Activated CD4-positive, alpha-beta memory T cell treated with anti-CD3 and anti-CD28 coated beads, Interleukin-2, amount 10 ng/mL, durations not matched to agents 7 days and 5 days (primary cell): ENCODE measurements at regions of chr9 and their contacts with region 1.

Region 1: GRCh38 chr9:98255578-98256296 is at the start of gene TBC1D2:
- DNase-seq: peak; percentile 98
- H3K4me3 Mint-ChIP-seq: peak within 1 kb of the TSS; percentile 93
- H3K27ac Mint-ChIP-seq: peak within 1 kb of the TSS; percentile 99
- H3K4me1 Mint-ChIP-seq: peaks cover 43% of the 10 kb centered on the region
- H3K27me3 Mint-ChIP-seq: no peaks in the 10 kb centered on the region
- total RNA-seq, gene TBC1D2: 11.0 to 11.9 TPM

Region 2: GRCh38 chr9:98045234-98046179 is 210.2 kb before region 1 on chr9:
- CTCF ChIA-PET with region 1: interaction called, 10 read pairs
- POLR2A ChIA-PET with region 1: interaction called, 32 read pairs
- DNase-seq: peak; percentile 44
- H3K4me3 Mint-ChIP-seq: peak overlapping the region; percentile 79
- H3K27ac Mint-ChIP-seq: peak overlapping the region; percentile 82
- H3K4me1 Mint-ChIP-seq: peaks cover 49% of the 10 kb centered on the region
- H3K27me3 Mint-ChIP-seq: no peaks in the 10 kb centered on the region

Region 3: DNA sequence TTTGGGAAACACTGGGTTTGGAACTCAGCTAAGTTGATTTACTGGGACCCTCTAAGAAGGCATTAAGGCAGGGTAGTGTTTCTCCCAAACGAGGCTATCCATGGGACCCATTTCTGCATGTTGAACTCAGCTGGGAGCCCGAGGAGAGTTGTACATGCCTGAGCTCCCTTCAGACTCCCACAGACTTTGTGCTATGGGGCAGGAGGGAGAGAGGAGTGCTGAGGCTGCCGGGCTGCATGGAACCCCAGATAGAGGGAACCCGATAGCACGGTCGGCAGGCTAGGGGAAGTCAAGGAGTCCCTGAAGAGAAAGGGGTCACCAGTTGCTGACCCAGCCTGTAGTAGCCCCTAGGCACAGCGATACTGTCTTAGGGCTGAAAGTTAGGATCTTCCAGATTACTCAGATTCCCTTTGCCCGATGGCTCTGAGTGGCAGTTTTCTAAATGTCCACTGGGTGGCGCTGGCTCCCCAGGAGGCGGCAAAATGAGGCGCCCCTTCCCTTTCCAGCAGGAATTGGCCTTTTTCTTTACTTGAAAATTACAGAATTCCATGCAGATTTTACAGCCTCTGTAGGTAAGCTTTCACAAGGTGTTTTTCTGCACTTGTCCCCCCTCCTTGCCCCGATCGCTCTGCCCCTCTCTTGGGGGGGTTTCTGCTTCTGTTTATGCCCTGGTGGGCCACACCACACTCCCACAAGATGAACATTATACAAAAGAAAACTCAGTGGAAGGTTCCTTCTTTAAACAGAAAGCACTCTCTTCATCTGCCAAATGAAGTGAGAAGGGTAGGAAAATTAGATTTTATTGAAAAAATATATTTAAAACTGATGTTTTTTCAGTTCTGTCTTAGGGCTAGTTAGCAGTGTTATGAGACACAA is 181.4 kb before region 1 on chr9:
- CTCF ChIA-PET with region 1: interaction called, 34 read pairs
- POLR2A ChIA-PET with region 1: interaction called, 6 read pairs
- DNase-seq: peak; percentile 73
- H3K4me3 Mint-ChIP-seq: no peak overlapping the region
- H3K27ac Mint-ChIP-seq: peak overlapping the region; percentile 93
- H3K4me1 Mint-ChIP-seq: peaks cover 47% of the 10 kb centered on the region
- H3K27me3 Mint-ChIP-seq: no peaks in the 10 kb centered on the region

Region 4: GRCh38 chr9:98192503-98193335 is 63.0 kb before region 1 on chr9 and contains the start of gene CORO2A:
- CTCF ChIA-PET with region 1: interaction called, 12 read pairs
- POLR2A ChIA-PET with region 1: interaction called, 23 read pairs
- DNase-seq: peak; percentile 71
- H3K4me3 Mint-ChIP-seq: peak within 1 kb of the TSS; percentile 80
- H3K27ac Mint-ChIP-seq: peak within 1 kb of the TSS; percentile 18
- H3K4me1 Mint-ChIP-seq: peaks cover 11% of the 10 kb centered on the region
- H3K27me3 Mint-ChIP-seq: no peaks in the 10 kb centered on the region
- total RNA-seq, gene CORO2A: 7.8 to 8.2 TPM

Region 5: GRCh38 chr9:98241357-98242300 is 14.1 kb before region 1 on chr9:
- CTCF ChIA-PET with region 1: interaction called, 18 read pairs
- POLR2A ChIA-PET with region 1: interaction called, 12 read pairs
- DNase-seq: no peak
- H3K4me3 Mint-ChIP-seq: no peak overlapping the region
- H3K27ac Mint-ChIP-seq: no peak overlapping the region
- H3K4me1 Mint-ChIP-seq: peaks cover 8% of the 10 kb centered on the region
- H3K27me3 Mint-ChIP-seq: no peaks in the 10 kb centered on the region